K562 (cell line): ENCODE measurements at regions of chr2 and their contacts with region 1.

Region 1: DNA sequence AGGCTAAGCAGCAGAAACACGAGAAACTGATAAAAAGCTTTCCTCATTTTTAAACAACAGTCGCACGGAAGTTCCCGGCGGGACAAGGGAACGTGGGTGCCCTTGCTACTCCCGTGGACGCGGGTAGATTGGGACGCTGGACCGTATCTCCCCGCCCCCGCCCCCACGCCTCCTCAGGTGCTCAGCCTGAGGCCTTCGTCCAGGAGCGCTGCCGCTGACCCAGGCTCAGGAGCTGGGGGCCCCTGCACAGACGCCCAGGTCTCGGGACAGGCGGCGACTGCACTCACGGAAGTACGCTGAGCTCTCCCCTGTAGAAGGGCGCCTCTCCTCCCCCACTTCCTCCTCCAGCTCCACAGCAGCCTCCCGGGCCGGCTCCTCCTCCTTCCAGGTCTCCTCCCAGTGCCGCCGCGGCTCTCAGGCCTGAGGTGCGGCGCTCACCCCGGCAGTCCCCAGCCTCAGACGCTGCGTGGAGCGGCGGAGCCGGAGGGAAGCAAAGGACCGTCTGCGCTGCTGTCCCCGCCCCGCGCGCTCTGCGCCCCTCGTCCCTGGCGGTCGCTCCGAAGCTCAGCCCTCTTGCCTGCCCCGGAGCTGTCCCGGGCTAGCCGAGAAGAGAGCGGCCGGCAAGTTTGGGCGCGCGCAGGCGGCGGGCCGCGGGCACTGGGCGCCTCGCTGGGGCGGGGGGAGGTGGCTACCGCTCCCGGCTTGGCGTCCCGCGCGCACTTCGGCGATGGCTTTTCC is at the start of gene ITGAV:
- DNase-seq: peak; percentile 87 to 96 (median 91)
- ATAC-seq: peak; percentile 95
- H3K4me3 ChIP-seq: peak within 1 kb of the TSS; percentile 77
- H3K27ac ChIP-seq: peak within 1 kb of the TSS; percentile 78
- H3K4me1 ChIP-seq: peaks cover 18% of the 10 kb centered on the region in 2 experiments; a peak in 4 of 5 replicates
- H3K27me3 ChIP-seq: no peaks in the 10 kb centered on the region
- CTCF ChIP-seq: no peak
- EP300 ChIP-seq: no peak
- POLR2A ChIP-seq: peak; percentile 94
- RAD21 ChIP-seq: 0 out of 4 replicates have a peak, but pooled peaks of 1 of the 2 experiments have one; percentile 2
- polyA plus RNA-seq, gene ITGAV: 3.7 to 4.6 TPM

Region 2: DNA sequence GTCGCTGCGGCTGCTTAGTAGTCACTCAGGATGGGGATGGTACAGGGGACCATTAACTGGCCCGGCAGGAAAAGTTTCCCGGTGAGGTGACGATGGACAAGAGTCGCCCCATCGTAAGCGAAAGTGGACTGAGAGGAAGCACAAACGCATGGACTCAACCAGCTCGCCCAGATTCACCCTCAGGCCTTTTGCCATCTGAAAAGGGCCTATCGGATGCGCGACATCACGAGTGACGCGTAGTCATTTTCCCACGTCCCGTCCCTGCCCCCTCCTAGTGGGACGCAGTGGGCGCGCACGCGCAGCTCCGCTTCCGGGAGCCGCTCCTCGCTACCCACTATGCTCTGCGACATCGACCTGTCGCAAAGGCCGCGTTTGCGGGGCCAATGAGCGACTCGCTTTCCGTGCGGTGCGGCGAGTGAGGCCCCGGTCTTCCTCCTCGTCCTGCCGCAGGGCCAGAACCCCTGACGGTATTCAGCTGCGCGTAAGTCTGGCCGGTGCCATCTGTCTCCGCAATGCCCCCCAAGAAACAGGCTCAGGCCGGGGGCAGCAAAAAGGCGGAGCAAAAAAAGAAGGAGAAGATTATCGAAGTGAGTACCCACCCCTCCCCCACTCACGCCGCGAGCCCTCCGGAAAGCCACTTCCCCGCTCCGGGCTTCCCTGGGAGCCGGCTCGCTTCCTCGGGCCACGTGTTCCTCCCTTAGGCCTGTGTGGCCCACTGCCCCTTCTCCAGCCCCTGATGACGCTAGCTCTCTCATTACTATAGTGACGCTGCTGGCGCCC is 103.7 kb before region 1 on chr2 and contains the start of gene ZC3H15:
- CTCF ChIA-PET with region 1: no interaction called
- POLR2A ChIA-PET with region 1: interaction called, 6 read pairs
- in situ Hi-C with region 1: no loop called
- intact Hi-C with region 1: loop called (anchors 1 kb)
- DNase-seq: peak; percentile 98 to 99 (median 98)
- ATAC-seq: peak; percentile 86
- H3K4me3 ChIP-seq: peak within 1 kb of the TSS; percentile 75
- H3K27ac ChIP-seq: peak within 1 kb of the TSS; percentile 90
- H3K4me1 ChIP-seq: peaks cover 2 to 28% of the 10 kb centered on the region in 2 experiments; a peak in 3 of 5 replicates
- H3K27me3 ChIP-seq: no peaks in the 10 kb centered on the region
- CTCF ChIP-seq: peak in 1 of 3 experiments; percentile 4; a peak in 1 of 6 replicates
- EP300 ChIP-seq: peak; percentile 48; the same call in 1 of the 2 replicates
- POLR2A ChIP-seq: peak; percentile 98
- RAD21 ChIP-seq: no peak
- polyA plus RNA-seq, gene ZC3H15: 182 to 186 TPM

Region 3: GRCh38 chr2:186503848-186504606 is 85.8 kb before region 1 on chr2:
- CTCF ChIA-PET with region 1: no interaction called
- POLR2A ChIA-PET with region 1: interaction called, 3 read pairs
- in situ Hi-C with region 1: no loop called
- intact Hi-C with region 1: loop called (anchors 5 kb)
- DNase-seq: peak in 1 of 4 experiments; percentile 23
- ATAC-seq: peak; percentile 66
- H3K4me3 ChIP-seq: no peak overlapping the region
- H3K27ac ChIP-seq: no peak overlapping the region
- H3K4me1 ChIP-seq: no peaks in the 10 kb centered on the region
- H3K27me3 ChIP-seq: no peaks in the 10 kb centered on the region
- CTCF ChIP-seq: peak; percentile 28 to 63 (median 30); a peak in 4 of 6 replicates
- EP300 ChIP-seq: no peak
- POLR2A ChIP-seq: no peak
- RAD21 ChIP-seq: peak; percentile 64 to 81

Region 4: GRCh38 chr2:186575302-186575701 is 14.5 kb before region 1 on chr2:
- CTCF ChIA-PET with region 1: no interaction called
- POLR2A ChIA-PET with region 1: interaction called, 12 read pairs
- in situ Hi-C with region 1: no loop called
- intact Hi-C with region 1: no loop called
- DNase-seq: peak; percentile 62 to 87 (median 70)
- ATAC-seq: peak; percentile 94
- H3K4me3 ChIP-seq: no peak overlapping the region
- H3K27ac ChIP-seq: peak overlapping the region; percentile 45; the same call in 1 of the 3 replicates
- H3K4me1 ChIP-seq: peaks cover 0 to 6% of the 10 kb centered on the region in 2 experiments; a peak in 3 of 5 replicates
- H3K27me3 ChIP-seq: no peaks in the 10 kb centered on the region
- CTCF ChIP-seq: peak in 1 of 3 experiments; percentile 5; a peak in 1 of 6 replicates
- EP300 ChIP-seq: peak; percentile 46; the same call in 1 of the 2 replicates
- POLR2A ChIP-seq: no peak
- RAD21 ChIP-seq: no peak; a peak in 1 of 4 replicates

Region 5: GRCh38 chr2:187547353-187547979 is 957.7 kb after region 1 on chr2:
- CTCF ChIA-PET with region 1: no interaction called
- POLR2A ChIA-PET with region 1: no interaction called
- in situ Hi-C with region 1: no loop called
- intact Hi-C with region 1: loop called (anchors 10 kb)
- DNase-seq: peak; percentile 54 to 89 (median 67)
- ATAC-seq: peak; percentile 86
- H3K4me3 ChIP-seq: no peak overlapping the region
- H3K27ac ChIP-seq: peak overlapping the region; percentile 57
- H3K4me1 ChIP-seq: peaks cover 0 to 20% of the 10 kb centered on the region in 2 experiments; a peak in 3 of 5 replicates
- H3K27me3 ChIP-seq: no peaks in the 10 kb centered on the region
- CTCF ChIP-seq: no peak
- EP300 ChIP-seq: peak; percentile 65; the same call in 1 of the 2 replicates
- POLR2A ChIP-seq: no peak
- RAD21 ChIP-seq: no peak